OCI-LY7 (cell line): ENCODE measurements at regions of chr2 and their contacts with region 1.

Region 1: DNA sequence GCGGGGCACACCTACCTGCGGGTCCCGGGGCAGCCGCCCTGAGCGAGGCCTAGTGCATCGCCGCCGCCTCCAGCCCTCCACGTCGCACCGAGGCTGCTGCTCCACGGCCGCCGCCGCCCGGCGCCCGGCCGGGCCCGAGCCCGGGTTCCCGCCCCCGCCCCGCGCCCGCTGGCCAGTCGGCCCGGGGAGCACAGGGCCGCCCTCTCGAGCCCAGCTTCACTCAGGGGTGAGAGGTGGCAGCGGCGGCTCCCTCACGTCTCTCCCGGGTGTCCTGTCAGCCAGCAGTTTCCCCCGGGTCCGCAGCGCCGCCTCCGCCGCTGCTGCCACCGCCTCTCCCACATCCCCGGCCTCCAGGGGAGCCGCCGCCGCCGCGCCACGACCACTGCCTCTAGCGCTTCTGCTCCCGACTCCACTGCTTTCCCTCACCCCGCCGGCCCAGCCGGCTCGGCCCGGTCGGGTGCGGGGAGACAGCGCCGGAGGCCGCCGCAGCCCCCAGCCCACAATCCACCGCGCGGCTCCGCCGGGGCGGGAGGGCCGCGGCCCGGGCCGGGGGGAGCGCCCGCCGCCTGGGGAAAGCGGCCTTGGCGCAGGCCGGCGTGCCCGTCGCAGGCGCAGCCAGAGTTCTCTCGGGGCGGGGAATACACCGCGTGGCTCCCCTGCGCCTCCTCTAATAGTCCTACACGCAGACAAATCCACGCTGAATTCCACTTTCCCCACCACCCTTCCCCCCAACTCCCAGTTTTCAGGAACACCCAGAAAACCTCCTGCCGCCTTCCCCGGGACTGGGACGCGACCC is at the start of gene VPS54:
- DNase-seq: peak; percentile 72
- H3K4me3 ChIP-seq: peak within 1 kb of the TSS; percentile 86
- H3K27ac ChIP-seq: peak within 1 kb of the TSS; percentile 54
- H3K4me1 ChIP-seq: peaks cover 36% of the 10 kb centered on the region
- CTCF ChIP-seq: no peak
- total RNA-seq, gene VPS54: 12.9 and 14.7 TPM in 2 replicates

Region 2: DNA sequence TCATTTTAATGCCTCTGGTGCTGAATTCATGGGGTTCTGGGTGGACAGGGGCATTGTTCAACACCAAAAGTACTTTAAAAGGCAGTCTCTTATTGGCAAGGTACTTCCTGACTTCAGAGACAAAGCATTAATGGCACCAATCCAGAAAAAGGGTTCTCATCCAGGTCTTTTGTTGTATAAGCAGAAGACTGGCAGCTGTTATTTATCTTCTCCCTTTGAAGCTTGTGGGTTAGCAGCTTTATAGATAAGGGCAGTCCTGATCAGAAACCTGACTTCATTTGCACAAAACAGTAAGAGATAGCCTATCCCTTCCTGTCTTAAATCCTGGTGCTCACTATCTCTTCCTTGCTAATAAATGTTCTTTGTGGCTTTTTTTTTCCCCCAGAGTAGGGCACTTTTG is 68.7 kb before region 1 on chr2:
- CTCF ChIA-PET with region 1: no interaction called
- POLR2A ChIA-PET with region 1: no interaction called
- intact Hi-C with region 1: loop called (anchors 10 kb)
- DNase-seq: no peak
- H3K4me3 ChIP-seq: no peak overlapping the region
- H3K27ac ChIP-seq: no peak overlapping the region
- H3K4me1 ChIP-seq: no peaks in the 10 kb centered on the region
- CTCF ChIP-seq: no peak

Region 3: DNA sequence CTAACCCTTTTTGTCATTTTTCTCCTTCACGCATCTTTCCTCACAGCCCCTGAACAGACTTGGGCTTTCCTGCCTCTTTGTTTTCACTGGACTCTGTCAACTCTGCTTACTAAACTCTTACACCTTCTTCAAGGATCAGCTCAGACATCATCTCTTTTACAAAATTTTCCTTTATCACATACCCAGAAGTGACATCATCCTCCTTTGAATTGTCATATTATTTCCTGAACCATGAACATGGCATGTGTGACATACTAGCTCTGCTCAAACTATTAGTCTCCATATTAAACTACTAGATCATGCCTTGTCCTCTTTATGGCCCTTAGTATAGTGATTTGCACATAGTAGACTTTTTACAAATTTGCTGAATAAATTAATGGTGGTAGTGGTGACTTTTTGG is 14.8 kb after region 1 on chr2:
- CTCF ChIA-PET with region 1: no interaction called
- POLR2A ChIA-PET with region 1: interaction called, 12 read pairs
- intact Hi-C with region 1: no loop called
- DNase-seq: no peak
- H3K4me3 ChIP-seq: no peak overlapping the region
- H3K27ac ChIP-seq: no peak overlapping the region
- H3K4me1 ChIP-seq: peaks cover 5% of the 10 kb centered on the region
- CTCF ChIP-seq: no peak